ENCODE measurements at regions of chr14 and their contacts with region 1.

Region 1: DNA sequence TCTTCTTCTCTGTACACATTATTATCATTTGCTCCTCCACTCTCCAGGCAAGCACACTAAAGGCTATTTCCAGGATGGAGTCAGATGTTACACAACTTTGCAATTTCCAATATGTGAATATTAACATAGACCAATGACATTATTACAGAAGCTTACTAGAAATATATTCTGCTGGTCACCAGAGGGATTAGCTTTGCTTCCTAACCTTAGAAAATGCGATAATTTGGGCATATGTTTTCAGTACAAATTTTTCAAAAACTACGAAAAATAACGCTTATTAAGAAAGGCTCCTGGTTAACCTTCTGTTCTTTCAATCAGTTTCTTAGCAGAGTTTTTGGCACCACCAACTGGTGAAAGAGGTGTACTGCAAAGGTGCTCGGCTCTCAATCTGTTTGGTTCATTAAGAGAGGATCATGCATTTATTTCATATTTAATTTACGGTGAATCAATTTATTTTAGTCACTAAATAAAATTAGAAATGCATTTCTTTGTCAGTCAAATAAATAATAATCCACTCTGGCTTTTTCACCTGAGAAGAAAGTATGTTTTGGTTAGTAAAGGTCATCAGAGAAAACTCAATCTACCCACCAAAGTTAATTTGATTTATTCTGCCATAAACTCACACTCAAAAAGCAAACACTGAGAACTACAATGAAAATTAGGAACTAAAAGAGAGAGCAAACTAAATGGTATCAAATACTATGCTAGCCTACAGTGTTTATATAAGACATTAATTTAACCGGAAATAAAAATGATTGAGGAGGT is 39.2 kb downstream of the EFCAB11 start:
- DNase-seq: peak; percentile 88
- H3K4me3 Mint-ChIP-seq: no peak overlapping the region
- H3K27ac Mint-ChIP-seq: no peak overlapping the region
- H3K4me1 Mint-ChIP-seq: no peaks in the 10 kb centered on the region
- H3K27me3 Mint-ChIP-seq: peaks cover 22% of the 10 kb centered on the region

Region 2: GRCh38 chr14:88667555-88668273 is 1247.6 kb before region 1 on chr14:
- intact Hi-C with region 1: loop called (anchors 5 kb)
- DNase-seq: peak; percentile 83
- H3K4me3 Mint-ChIP-seq: no peak overlapping the region
- H3K27ac Mint-ChIP-seq: no peak overlapping the region
- H3K4me1 Mint-ChIP-seq: no peaks in the 10 kb centered on the region
- H3K27me3 Mint-ChIP-seq: no peaks in the 10 kb centered on the region

Region 3: GRCh38 chr14:89027097-89027740 is 888.1 kb before region 1 on chr14:
- intact Hi-C with region 1: loop called (anchors 1 kb)
- DNase-seq: peak; percentile 89
- H3K4me3 Mint-ChIP-seq: peak overlapping the region; percentile 68
- H3K27ac Mint-ChIP-seq: no peak overlapping the region
- H3K4me1 Mint-ChIP-seq: no peaks in the 10 kb centered on the region
- H3K27me3 Mint-ChIP-seq: peaks cover 60% of the 10 kb centered on the region

Region 4: GRCh38 chr14:89040460-89041259 is 874.6 kb before region 1 on chr14:
- intact Hi-C with region 1: loop called (anchors 2 kb)
- DNase-seq: peak; percentile 93
- H3K4me3 Mint-ChIP-seq: peak overlapping the region; percentile 70
- H3K27ac Mint-ChIP-seq: no peak overlapping the region
- H3K4me1 Mint-ChIP-seq: peaks cover 7% of the 10 kb centered on the region
- H3K27me3 Mint-ChIP-seq: peaks cover 14% of the 10 kb centered on the region

Region 5: GRCh38 chr14:89178802-89179535 is 736.3 kb before region 1 on chr14:
- intact Hi-C with region 1: loop called (anchors 2 kb)
- DNase-seq: no peak
- H3K4me3 Mint-ChIP-seq: no peak overlapping the region
- H3K27ac Mint-ChIP-seq: no peak overlapping the region
- H3K4me1 Mint-ChIP-seq: peaks cover 5% of the 10 kb centered on the region
- H3K27me3 Mint-ChIP-seq: no peaks in the 10 kb centered on the region

Region 6: GRCh38 chr14:89720741-89721315 is 194.5 kb before region 1 on chr14:
- intact Hi-C with region 1: no loop called
- DNase-seq: peak; percentile 89
- H3K4me3 Mint-ChIP-seq: peak overlapping the region; percentile 68
- H3K27ac Mint-ChIP-seq: peak overlapping the region; percentile 91
- H3K4me1 Mint-ChIP-seq: peaks cover 57% of the 10 kb centered on the region
- H3K27me3 Mint-ChIP-seq: no peaks in the 10 kb centered on the region

Region 7: GRCh38 chr14:89773644-89774316 is 141.5 kb before region 1 on chr14:
- intact Hi-C with region 1: loop called (anchors 10 kb)
- DNase-seq: peak; percentile 84
- H3K4me3 Mint-ChIP-seq: peak overlapping the region; percentile 60
- H3K27ac Mint-ChIP-seq: no peak overlapping the region
- H3K4me1 Mint-ChIP-seq: peaks cover 19% of the 10 kb centered on the region
- H3K27me3 Mint-ChIP-seq: peaks cover 20% of the 10 kb centered on the region

Measured in activated CD4-positive, alpha-beta T cell treated with anti-CD3 and anti-CD28 coated beads, Interleukin-2, amount 10 ng/mL, durations not matched to agents 24 days and 14 days (primary cell).